Right ventricle myocardium superior (tissue), 1 donor: ENCODE measurements at regions of chr3 and their contacts with region 1.

Region 1: GRCh38 chr3:77038468-77038929 is 1.4 kb upstream of the ROBO2 start:
- DNase-seq: peak; percentile 53
- ATAC-seq: peak; percentile 96

Region 2: GRCh38 chr3:77254967-77255831 is 216.7 kb after region 1 on chr3:
- intact Hi-C with region 1: loop called (anchors 5 kb)
- DNase-seq: no peak
- ATAC-seq: peak; percentile 69

Region 3: DNA sequence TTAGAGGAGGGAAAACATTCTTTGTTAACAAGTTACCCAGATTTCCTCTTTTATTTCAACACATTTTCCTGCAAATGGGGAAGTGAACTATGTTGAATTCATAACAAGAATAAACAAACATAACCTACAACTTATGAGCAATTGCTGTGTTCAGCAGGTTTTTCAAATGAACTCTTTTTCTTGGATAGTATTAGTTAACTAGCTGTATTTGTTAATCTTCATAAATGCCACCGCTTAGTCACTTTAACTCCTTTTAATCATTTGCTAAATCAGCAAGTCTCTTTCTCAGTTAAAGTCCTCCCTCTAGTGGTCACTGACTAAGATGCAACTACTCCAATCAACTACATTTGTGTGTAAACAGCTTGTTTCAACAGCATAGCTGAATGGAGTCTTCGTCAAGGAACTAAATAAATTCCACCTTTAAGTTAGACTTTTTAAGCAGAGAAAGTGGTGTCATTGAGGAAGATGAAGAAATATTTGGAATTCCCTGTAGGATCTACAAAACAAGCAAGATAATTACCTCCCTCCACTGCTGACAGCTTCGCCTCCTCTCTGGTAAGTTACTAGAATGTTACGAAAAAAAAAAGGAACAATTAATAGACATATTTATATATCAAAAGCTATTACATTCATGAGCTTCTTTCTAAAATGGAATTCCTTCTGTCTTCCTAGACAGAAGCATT is 1607.3 kb after region 1 on chr3:
- intact Hi-C with region 1: loop called (anchors 10 kb)
- DNase-seq: no peak
- ATAC-seq: peak; percentile 74